Ascending aorta (tissue), 2 donors: ENCODE measurements at regions of chr5 and their contacts with region 1.

Region 1: DNA sequence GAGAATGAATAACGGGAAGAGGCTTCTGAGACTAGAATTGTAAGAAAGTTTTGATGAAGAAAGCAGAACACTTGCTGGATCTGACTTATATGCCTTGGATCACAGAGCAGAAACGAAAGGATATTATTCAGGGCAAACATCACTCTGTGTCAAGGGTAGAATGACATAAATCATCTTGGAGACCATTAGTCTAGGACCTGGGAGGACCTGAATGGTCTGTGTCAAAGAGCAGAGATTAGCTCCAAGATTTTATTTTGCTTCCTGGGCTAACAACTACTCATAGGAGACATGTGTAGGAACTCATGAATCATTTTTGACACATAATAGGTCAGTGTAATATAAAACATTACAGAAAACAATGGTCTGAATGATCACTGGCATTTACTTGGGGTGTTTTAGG is 417.9 kb downstream of the SLCO4C1 start:
- DNase-seq: no peak
- H3K4me3 ChIP-seq: no peak overlapping the region
- H3K27ac ChIP-seq: peak overlapping the region; percentile 8 to 37
- H3K4me1 ChIP-seq: peaks cover 0 to 18% of the 10 kb centered on the region in 2 donors
- H3K27me3 ChIP-seq: no peaks in the 10 kb centered on the region
- CTCF ChIP-seq: no peak

Region 2: GRCh38 chr5:101424530-101425175 is 453.5 kb before region 1 on chr5:
- intact Hi-C with region 1: loop called (anchors 10 kb)
- DNase-seq: no peak
- H3K4me3 ChIP-seq: no peak overlapping the region
- H3K27ac ChIP-seq: peak overlapping the region; percentile 9 to 19
- H3K4me1 ChIP-seq: no peaks in the 10 kb centered on the region
- H3K27me3 ChIP-seq: no peaks in the 10 kb centered on the region
- CTCF ChIP-seq: no peak